ENCODE measurements at regions of chr4 and their contacts with region 1.

Region 1: GRCh38 chr4:150219841-150220240 is 141.6 kb downstream of the DCLK2 start:
- DNase-seq: no peak
- H3K4me3 Mint-ChIP-seq: no peak overlapping the region
- H3K27ac Mint-ChIP-seq: no peak overlapping the region
- H3K4me1 Mint-ChIP-seq: no peaks in the 10 kb centered on the region
- H3K27me3 Mint-ChIP-seq: peaks cover 9% of the 10 kb centered on the region

Region 2: GRCh38 chr4:150242820-150243458 is 23.1 kb after region 1 on chr4:
- CTCF ChIA-PET with region 1: interaction called, 13 read pairs
- POLR2A ChIA-PET with region 1: no interaction called
- DNase-seq: no peak
- H3K4me3 Mint-ChIP-seq: no peak overlapping the region
- H3K27ac Mint-ChIP-seq: no peak overlapping the region
- H3K4me1 Mint-ChIP-seq: no peaks in the 10 kb centered on the region
- H3K27me3 Mint-ChIP-seq: peaks cover 2% of the 10 kb centered on the region

Measured in activated CD4-positive, alpha-beta memory T cell treated with anti-CD3 and anti-CD28 coated beads, Interleukin-2, amount 10 ng/mL, durations not matched to agents 7 days and 5 days (primary cell).